Upper lobe of right lung (tissue), 1 donor: ENCODE measurements at regions of chr1 and their contacts with region 1.

Region 1: GRCh38 chr1:1758692-1759455 is 19.4 kb downstream of the NADK start:
- DNase-seq: peak; percentile 96
- ATAC-seq: peak; percentile 93
- H3K4me3 ChIP-seq: no peak overlapping the region
- H3K27ac ChIP-seq: peak overlapping the region; percentile 76
- H3K4me1 ChIP-seq: peaks cover 22% of the 10 kb centered on the region
- H3K27me3 ChIP-seq: no peaks in the 10 kb centered on the region
- CTCF ChIP-seq: no peak

Region 2: GRCh38 chr1:1033009-1033587 is 725.8 kb before region 1 on chr1:
- intact Hi-C with region 1: no loop called
- DNase-seq: peak; percentile 91
- ATAC-seq: peak; percentile 89
- H3K4me3 ChIP-seq: peak overlapping the region; percentile 44
- H3K27ac ChIP-seq: no peak overlapping the region
- H3K4me1 ChIP-seq: peaks cover 7% of the 10 kb centered on the region
- H3K27me3 ChIP-seq: peaks cover 4% of the 10 kb centered on the region
- CTCF ChIP-seq: peak; percentile 65

Region 3: GRCh38 chr1:1507305-1507704 is 251.6 kb before region 1 on chr1:
- intact Hi-C with region 1: no loop called
- DNase-seq: no peak
- ATAC-seq: no peak
- H3K4me3 ChIP-seq: no peak overlapping the region
- H3K27ac ChIP-seq: no peak overlapping the region
- H3K4me1 ChIP-seq: peaks cover 17% of the 10 kb centered on the region
- H3K27me3 ChIP-seq: no peaks in the 10 kb centered on the region
- CTCF ChIP-seq: no peak

Region 4: DNA sequence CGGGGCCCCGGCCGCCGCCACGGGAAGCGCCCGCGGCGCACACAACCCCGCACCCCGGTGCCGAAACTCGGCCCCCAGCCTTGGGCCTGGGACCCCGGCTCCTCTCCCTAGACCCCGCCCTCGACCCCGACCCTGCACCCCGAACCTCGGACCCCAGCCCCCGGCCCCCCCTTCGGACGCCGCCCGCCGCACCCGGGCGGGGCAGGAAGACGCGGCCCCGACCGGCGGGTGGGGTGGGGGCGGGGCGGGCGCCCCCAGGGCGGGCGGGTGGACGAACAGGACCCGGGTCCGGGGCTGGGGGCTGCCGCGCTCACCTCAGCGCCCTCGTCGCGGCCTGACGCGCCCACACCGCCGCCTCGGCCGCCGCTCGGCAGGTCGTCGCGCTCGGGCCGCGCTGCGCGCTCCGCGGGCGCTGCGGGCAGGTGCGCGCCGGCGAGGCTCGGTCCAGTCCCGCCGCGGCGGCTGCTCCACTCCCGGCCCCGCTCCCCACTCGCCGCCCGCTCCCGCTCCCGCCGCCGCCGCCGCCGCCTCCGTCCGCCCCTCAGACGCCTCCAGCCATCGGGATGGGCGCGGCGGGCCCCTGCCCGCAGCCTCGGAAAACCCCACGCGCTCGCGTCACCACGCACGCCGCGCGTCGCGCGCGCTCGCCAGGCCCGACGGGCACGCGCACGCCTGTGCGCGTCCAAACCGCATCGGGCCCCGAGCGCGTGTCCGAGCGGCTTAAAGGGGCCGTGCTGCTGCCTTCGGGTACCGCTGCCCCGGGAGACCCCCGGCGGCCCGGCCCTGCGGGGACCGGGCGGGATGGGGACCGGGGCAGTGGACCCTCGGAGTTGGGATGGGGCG is 131.9 kb after region 1 on chr1 and contains the start of gene GNB1:
- intact Hi-C with region 1: loop called (anchors 10 kb)
- DNase-seq: peak; percentile 94
- ATAC-seq: peak; percentile 91
- H3K4me3 ChIP-seq: peak within 1 kb of the TSS; percentile 78
- H3K27ac ChIP-seq: peak within 1 kb of the TSS; percentile 90
- H3K4me1 ChIP-seq: peaks cover 48% of the 10 kb centered on the region
- H3K27me3 ChIP-seq: no peaks in the 10 kb centered on the region
- CTCF ChIP-seq: no peak
- total RNA-seq, gene GNB1: 328 TPM

Region 5: GRCh38 chr1:1919304-1920056 is 160.6 kb after region 1 on chr1:
- intact Hi-C with region 1: no loop called
- DNase-seq: peak; percentile 100
- ATAC-seq: peak; percentile 91
- H3K4me3 ChIP-seq: peak overlapping the region; percentile 56
- H3K27ac ChIP-seq: peak overlapping the region; percentile 14
- H3K4me1 ChIP-seq: peaks cover 9% of the 10 kb centered on the region
- H3K27me3 ChIP-seq: no peaks in the 10 kb centered on the region
- CTCF ChIP-seq: no peak

Region 6: DNA sequence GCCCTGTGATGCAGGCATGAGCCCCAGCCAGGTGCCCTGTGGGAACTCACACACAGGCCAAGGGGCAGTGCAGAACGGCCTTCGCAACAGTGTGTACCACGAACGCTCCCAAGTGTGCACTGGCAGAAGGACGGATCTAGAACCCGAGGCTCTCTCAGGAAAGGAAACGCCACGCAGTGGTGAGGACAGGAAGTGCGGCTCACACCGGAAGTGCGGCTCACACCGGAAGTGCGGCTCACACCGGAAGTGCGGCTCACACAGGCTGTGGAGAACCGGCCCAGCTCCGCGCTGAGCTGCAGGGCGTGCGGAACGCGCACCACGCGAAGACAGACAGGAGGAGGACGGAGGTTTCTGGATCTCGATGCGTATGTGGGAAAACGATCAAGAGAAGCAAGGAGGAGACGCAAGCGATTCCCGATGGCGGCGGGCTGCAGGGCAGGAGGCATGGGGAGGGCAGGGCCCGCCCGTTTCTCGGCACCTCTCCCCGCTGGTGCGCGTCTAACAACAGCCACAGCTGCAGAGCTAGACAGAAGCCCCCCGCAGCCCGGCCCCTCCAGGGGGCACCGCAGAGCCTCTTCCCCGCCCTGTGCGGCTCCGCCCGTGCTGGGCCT is 196.1 kb after region 1 on chr1:
- intact Hi-C with region 1: no loop called
- DNase-seq: no peak
- ATAC-seq: no peak
- H3K4me3 ChIP-seq: no peak overlapping the region
- H3K27ac ChIP-seq: no peak overlapping the region
- H3K4me1 ChIP-seq: no peaks in the 10 kb centered on the region
- H3K27me3 ChIP-seq: no peaks in the 10 kb centered on the region
- CTCF ChIP-seq: peak; percentile 5